ENCODE measurements at regions of chr15 and their contacts with region 1.

Region 1: GRCh38 chr15:64513823-64514222 is 53.4 kb downstream of the ZNF609 start:
- DNase-seq: no peak
- H3K4me3 ChIP-seq: no peak overlapping the region
- H3K4me3 Mint-ChIP-seq: peak overlapping the region in 6 of 8 donors; percentile 17 to 76 (median 40)
- H3K27ac ChIP-seq: no peak overlapping the region
- H3K27ac Mint-ChIP-seq: peak overlapping the region; percentile 47 to 86 (median 79)
- H3K4me1 ChIP-seq: peaks cover 36% of the 10 kb centered on the region
- H3K4me1 Mint-ChIP-seq: peaks cover 38 to 60% (median 51%) of the 10 kb centered on the region in 4 donors
- H3K27me3 ChIP-seq: no peaks in the 10 kb centered on the region
- H3K27me3 Mint-ChIP-seq: no peaks in the 10 kb centered on the region

Region 2: GRCh38 chr15:64503197-64503596 is 10.6 kb before region 1 on chr15:
- CTCF ChIA-PET with region 1: interaction called, 4 read pairs
- POLR2A ChIA-PET with region 1: interaction called, 10 read pairs
- intact Hi-C with region 1: no loop called
- DNase-seq: peak in 1 of 5 donors; percentile 20
- H3K4me3 ChIP-seq: peak overlapping the region; percentile 23 to 30
- H3K4me3 Mint-ChIP-seq: peak overlapping the region; percentile 49 to 80 (median 68)
- H3K27ac ChIP-seq: peak overlapping the region; percentile 52
- H3K27ac Mint-ChIP-seq: peak overlapping the region; percentile 68 to 94 (median 84)
- H3K4me1 ChIP-seq: peaks cover 82% of the 10 kb centered on the region
- H3K4me1 Mint-ChIP-seq: peaks cover 68 to 91% (median 80%) of the 10 kb centered on the region in 4 donors
- H3K27me3 ChIP-seq: no peaks in the 10 kb centered on the region
- H3K27me3 Mint-ChIP-seq: no peaks in the 10 kb centered on the region

Region 3: GRCh38 chr15:64599716-64600115 is 85.9 kb after region 1 on chr15:
- CTCF ChIA-PET with region 1: no interaction called
- POLR2A ChIA-PET with region 1: no interaction called
- intact Hi-C with region 1: no loop called
- DNase-seq: no peak
- H3K4me3 ChIP-seq: no peak overlapping the region
- H3K4me3 Mint-ChIP-seq: peak overlapping the region in 6 of 8 donors; percentile 14 to 60 (median 44)
- H3K27ac ChIP-seq: no peak overlapping the region
- H3K27ac Mint-ChIP-seq: peak overlapping the region; percentile 10 to 90 (median 52)
- H3K4me1 ChIP-seq: peaks cover 79% of the 10 kb centered on the region
- H3K4me1 Mint-ChIP-seq: peaks cover 47 to 78% (median 67%) of the 10 kb centered on the region in 4 donors
- H3K27me3 ChIP-seq: no peaks in the 10 kb centered on the region
- H3K27me3 Mint-ChIP-seq: no peaks in the 10 kb centered on the region

Region 4: GRCh38 chr15:64740311-64741170 is 226.7 kb after region 1 on chr15:
- CTCF ChIA-PET with region 1: no interaction called
- POLR2A ChIA-PET with region 1: no interaction called
- intact Hi-C with region 1: no loop called
- DNase-seq: no peak
- H3K4me3 ChIP-seq: no peak overlapping the region
- H3K4me3 Mint-ChIP-seq: no peak overlapping the region
- H3K27ac ChIP-seq: no peak overlapping the region
- H3K27ac Mint-ChIP-seq: no peak overlapping the region
- H3K4me1 ChIP-seq: no peaks in the 10 kb centered on the region
- H3K4me1 Mint-ChIP-seq: no peaks in the 10 kb centered on the region
- H3K27me3 ChIP-seq: no peaks in the 10 kb centered on the region
- H3K27me3 Mint-ChIP-seq: peaks cover 0 to 2% of the 10 kb centered on the region in 2 donors

Measured in CD4-positive, alpha-beta memory T cell (primary cell).